Mammary epithelial cell (primary cell): ENCODE measurements at regions of chr6 and their contacts with region 1.

Region 1: GRCh38 chr6:38973178-38974054 is 75.2 kb upstream of the GLP1R start:
- DNase-seq: peak; percentile 83
- H3K4me3 ChIP-seq: no peak overlapping the region
- H3K27ac ChIP-seq: no peak overlapping the region
- H3K4me1 ChIP-seq: no peaks in the 10 kb centered on the region
- H3K27me3 ChIP-seq: peaks cover 3% of the 10 kb centered on the region
- CTCF ChIP-seq: peak; percentile 77 to 84

Region 2: GRCh38 chr6:39062014-39062740 is 88.8 kb after region 1 on chr6:
- CTCF ChIA-PET with region 1: no interaction called
- dilution Hi-C with region 1: no loop called
- in situ Hi-C with region 1: no loop called
- intact Hi-C with region 1: no loop called
- DNase-seq: no peak
- H3K4me3 ChIP-seq: no peak overlapping the region
- H3K27ac ChIP-seq: no peak overlapping the region
- H3K4me1 ChIP-seq: no peaks in the 10 kb centered on the region
- H3K27me3 ChIP-seq: no peaks in the 10 kb centered on the region
- CTCF ChIP-seq: no peak

Region 3: DNA sequence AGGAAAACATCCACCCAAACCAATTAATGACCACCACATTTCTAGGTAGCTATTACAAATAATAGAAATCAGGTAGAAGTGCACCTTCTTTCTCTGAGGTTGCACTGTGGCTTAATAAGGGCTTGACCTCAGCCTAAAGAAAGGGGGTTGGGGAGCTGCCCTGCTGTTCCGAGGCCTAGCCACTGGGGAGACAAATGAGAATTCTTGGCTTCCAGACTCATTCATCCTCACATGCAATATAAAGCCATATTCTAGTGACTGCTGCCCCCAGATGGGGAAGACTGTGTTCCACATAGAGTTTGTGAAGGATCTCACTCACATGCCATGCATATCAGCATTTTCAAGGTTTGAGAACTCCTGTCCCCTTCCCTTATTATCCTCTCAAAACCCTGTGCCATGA is 118.7 kb after region 1 on chr6:
- CTCF ChIA-PET with region 1: no interaction called
- dilution Hi-C with region 1: no loop called
- in situ Hi-C with region 1: no loop called
- intact Hi-C with region 1: loop called (anchors 1 kb)
- DNase-seq: no peak
- H3K4me3 ChIP-seq: no peak overlapping the region
- H3K27ac ChIP-seq: no peak overlapping the region
- H3K4me1 ChIP-seq: no peaks in the 10 kb centered on the region
- H3K27me3 ChIP-seq: no peaks in the 10 kb centered on the region
- CTCF ChIP-seq: peak in 1 of 2 donors; percentile 40

Region 4: DNA sequence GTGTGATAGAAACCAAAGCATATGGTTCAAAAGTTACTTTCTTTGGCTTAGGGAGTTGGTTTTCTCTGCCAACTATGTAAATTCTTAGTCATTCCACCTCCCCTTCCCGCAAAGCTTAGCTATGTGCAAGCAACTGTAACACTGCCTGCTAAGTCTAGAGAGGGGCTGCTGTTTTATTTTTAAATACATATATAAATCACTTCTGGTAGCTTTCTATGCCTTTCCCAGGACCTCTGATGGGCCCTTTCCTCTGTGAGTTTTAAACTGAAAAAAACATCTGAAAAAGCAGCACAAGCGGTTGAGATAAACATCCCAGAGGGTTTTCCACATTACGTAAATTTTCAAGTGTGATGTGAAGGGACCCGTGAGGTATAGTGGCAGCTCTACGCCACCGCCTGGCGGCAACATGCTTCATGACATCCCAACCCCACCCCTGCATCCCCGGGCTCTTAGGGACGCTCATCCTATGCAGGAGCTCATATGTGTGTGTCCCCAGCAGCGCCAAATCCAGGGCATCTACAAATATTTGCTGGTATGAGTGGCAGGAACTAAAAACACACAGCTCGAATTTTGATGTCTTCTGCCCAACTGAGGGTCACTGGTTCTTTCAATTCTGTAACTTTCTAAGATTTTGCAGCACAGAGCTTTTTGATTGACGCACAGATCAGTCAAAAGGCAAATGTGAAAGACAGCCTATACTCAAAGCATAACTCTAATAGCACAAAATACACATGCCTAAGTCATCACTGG is 128.8 kb after region 1 on chr6:
- CTCF ChIA-PET with region 1: no interaction called
- dilution Hi-C with region 1: no loop called
- in situ Hi-C with region 1: loop called in 1 of 2 experiments (anchors 10 kb)
- intact Hi-C with region 1: no loop called
- DNase-seq: peak; percentile 20
- H3K4me3 ChIP-seq: no peak overlapping the region
- H3K27ac ChIP-seq: no peak overlapping the region
- H3K4me1 ChIP-seq: no peaks in the 10 kb centered on the region
- H3K27me3 ChIP-seq: no peaks in the 10 kb centered on the region
- CTCF ChIP-seq: peak; percentile 39 to 53

Region 5: DNA sequence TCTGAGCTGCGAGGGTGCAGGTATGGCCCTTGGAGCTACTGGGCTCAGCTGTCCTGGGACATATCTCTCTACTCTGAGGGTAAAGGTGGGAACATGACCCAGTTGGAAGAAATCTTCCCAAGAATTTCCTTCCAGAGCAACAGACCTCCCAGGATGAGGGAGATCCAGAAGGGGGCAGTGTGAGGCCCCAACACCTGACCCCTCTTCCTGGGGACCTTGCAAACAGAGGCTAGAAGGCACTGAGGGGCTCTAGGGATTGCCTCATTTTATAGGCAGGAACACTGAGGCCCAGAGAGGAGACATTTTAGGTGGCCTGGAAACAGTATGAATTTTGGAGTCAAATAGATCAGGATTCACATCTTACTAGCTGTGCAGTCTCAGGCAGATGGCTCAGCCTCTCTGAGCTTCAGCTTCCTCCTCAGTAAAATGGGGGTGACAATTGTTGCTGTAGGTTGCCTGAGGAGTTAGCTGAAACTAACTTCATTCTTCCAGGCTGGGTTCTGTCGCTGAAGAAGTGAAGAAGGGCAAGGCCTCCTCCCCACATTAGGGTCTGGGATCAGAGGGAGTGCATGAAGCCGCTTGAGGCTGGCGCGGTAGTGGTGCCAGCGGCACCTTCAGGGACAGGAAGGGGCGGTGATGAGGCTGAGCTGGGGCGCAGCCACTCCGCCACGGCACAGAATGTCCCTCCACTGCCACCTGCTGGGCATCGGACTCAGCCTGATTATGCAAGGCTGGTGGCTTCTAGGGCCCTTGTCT is 329.4 kb after region 1 on chr6:
- CTCF ChIA-PET with region 1: no interaction called
- dilution Hi-C with region 1: no loop called
- in situ Hi-C with region 1: loop called (anchors 10 kb)
- intact Hi-C with region 1: loop called (anchors 1 kb)
- DNase-seq: peak; percentile 56
- H3K4me3 ChIP-seq: peak overlapping the region in 1 of 3 experiments; percentile 16
- H3K27ac ChIP-seq: no peak overlapping the region
- H3K4me1 ChIP-seq: no peaks in the 10 kb centered on the region
- H3K27me3 ChIP-seq: peaks cover 3% of the 10 kb centered on the region
- CTCF ChIP-seq: peak; percentile 75 to 89

Region 6: DNA sequence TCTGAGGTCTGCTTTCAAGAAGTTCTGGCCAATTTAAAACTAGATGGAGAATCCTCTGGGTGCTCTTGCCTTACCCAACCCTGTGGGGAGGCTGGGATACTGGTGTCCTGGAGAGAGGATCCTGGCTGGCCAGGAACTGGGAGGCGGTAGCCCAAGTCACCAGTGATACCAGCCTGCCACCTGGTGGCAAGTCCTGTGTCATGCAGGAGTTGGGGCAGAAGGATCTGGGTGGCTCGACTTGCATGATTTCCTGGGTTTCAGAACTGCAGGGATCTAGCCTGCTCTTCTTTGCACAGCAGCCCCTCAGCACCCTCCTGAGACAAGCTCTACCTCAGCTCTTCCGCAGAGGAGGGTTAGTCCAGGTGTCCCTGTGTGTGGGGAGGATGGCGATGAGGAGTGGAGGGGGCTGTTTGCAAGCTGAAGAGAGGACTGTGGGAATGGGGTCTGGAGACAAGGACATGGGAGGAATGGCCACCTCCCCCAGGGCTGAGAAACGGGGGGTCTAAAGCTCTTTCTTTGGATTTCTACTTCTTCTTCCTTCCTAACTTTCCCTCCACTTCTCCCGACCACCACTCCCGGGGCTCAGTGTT is 336.6 kb after region 1 on chr6:
- CTCF ChIA-PET with region 1: no interaction called
- dilution Hi-C with region 1: no loop called
- in situ Hi-C with region 1: loop called (anchors 10 kb)
- intact Hi-C with region 1: loop called (anchors 1 kb)
- DNase-seq: peak; percentile 50
- H3K4me3 ChIP-seq: no peak overlapping the region
- H3K27ac ChIP-seq: no peak overlapping the region
- H3K4me1 ChIP-seq: no peaks in the 10 kb centered on the region
- H3K27me3 ChIP-seq: peaks cover 18% of the 10 kb centered on the region
- CTCF ChIP-seq: peak; percentile 93 to 94